Endothelial cell of umbilical vein (primary cell): ENCODE measurements at regions of chr16 and their contacts with region 1.

Region 1: DNA sequence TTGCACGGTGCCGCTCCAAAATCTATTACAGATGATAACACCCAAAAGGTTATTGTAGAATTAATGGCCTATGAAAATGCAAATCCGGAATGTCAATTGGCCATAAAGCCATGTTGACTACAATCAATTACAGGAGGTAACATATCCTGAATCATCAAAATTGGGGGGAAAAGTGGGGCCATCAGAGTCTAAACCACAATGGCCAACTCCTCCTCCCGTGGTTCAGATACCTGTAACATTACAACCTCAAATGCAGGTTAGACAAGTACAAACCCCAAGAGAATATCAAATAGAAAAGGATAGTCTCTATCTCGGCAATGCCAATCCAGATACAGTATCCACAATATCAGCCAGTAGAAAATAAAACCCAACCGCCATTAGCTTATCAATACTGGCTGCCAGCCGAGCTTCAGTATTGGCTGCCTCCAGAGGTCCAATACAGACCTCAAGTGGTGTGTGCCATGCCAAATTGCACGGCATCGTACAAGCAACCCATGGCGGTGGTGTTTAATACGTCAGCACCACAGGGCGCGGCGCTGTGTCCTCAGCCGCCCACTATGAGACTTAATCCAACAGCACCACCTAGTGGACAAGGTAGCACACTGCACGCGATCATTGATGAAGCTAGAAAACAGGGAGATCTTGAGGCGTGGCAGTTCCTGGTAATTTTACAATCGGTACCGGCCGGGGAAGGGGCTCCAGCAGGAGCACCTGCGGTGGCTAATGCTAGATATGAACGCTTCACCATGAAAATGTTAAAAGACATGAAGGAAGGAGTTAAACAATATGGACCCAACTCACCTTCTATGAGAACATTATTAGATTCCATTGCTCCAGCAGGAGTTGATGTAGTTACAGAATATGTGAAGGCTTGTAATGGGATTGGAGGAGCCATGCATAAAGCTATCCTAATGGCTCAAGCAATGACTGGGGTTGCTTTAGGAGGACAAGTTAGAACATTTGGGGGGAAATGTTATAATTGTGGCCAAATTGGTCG is 15.2 kb downstream of the FLYWCH1 start:
- DNase-seq: peak; percentile 81
- H3K4me3 ChIP-seq: peak overlapping the region in 1 of 3 experiments; percentile 7
- H3K27ac ChIP-seq: no peak overlapping the region
- H3K4me1 ChIP-seq: peaks cover 2% of the 10 kb centered on the region
- H3K27me3 ChIP-seq: no peaks in the 10 kb centered on the region
- CTCF ChIP-seq: peak; percentile 83 to 94
- POLR2A ChIP-seq: no peak

Region 2: DNA sequence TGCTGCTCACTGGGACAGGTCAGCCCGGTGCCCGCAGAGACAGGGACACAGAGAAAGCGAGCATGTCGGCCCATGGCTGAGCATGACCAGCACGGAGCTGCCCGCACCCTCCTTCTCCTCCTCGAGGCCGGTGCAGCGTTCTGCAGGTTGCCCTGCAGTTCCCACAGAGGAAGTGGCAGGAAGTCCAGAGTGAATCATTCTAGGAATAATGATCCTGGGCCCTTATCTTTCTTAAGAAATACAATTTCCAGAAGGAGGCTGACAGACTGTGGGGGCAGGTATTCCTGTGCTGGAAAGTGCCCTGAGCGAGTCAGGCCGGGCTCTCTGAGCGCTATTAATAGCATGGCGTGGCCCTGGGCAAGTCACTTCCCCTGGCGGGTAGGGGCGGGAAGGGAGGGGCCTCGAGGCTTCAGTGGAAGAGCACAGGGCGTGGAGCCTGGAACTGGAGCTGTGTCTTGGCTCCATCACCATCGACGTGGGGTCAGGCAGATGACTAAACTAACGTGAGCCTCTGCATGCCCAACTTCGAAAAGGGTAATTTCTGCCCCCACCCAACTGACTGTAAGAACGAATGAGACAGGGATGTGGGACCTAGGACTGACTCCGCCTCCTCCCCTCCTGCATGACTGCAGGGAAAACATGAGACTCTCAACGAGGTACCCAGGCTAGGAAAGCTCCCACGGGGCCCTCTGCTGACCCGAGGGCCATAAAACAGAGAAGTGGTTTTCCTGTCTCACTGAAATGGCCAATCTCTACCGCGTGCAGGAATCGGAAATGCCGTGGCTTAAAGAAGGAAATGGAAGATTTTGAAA is 1383.7 kb before region 1 on chr16:
- CTCF ChIA-PET with region 1: no interaction called
- POLR2A ChIA-PET with region 1: no interaction called
- dilution Hi-C with region 1: no loop called
- intact Hi-C with region 1: no loop called
- DNase-seq: peak; percentile 92
- H3K4me3 ChIP-seq: no peak overlapping the region
- H3K27ac ChIP-seq: peak overlapping the region; percentile 98
- H3K4me1 ChIP-seq: peaks cover 51% of the 10 kb centered on the region
- H3K27me3 ChIP-seq: no peaks in the 10 kb centered on the region
- CTCF ChIP-seq: peak; percentile 23 to 26
- POLR2A ChIP-seq: no peak

Region 3: DNA sequence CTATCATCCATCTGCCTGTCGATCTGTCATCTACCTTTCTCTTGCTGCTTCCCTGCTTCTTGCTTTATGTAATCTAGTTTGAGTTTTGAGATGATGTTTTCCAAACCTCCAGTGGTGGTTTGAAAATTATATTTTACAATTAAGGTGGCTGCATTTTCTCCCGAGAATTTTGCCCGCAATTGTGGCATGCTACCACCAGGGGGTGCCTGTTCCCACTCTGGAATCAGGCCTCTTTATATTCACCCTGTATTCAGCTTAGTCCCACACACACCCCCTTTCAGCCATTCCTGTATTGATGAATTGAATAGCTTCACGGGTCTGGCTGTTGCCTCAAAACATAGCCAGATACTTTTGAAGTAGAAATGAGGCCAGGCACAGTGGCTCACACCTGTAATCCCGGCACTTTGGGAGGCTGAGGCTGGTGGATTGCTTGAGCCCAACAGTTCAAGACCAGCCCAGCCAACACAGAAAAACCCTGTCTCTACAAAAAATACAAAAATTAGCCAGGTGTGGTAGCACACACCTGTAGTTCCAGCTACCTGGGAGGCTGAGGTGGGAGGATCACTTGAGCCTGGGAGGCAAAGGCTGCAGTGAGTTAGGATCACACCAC is 72.1 kb before region 1 on chr16:
- CTCF ChIA-PET with region 1: interaction called, 11 read pairs
- POLR2A ChIA-PET with region 1: no interaction called
- dilution Hi-C with region 1: no loop called
- intact Hi-C with region 1: no loop called
- DNase-seq: no peak
- H3K4me3 ChIP-seq: no peak overlapping the region
- H3K27ac ChIP-seq: no peak overlapping the region
- H3K4me1 ChIP-seq: no peaks in the 10 kb centered on the region
- H3K27me3 ChIP-seq: peaks cover 2 to 7% of the 10 kb centered on the region in 2 experiments
- CTCF ChIP-seq: peak; percentile 36 to 62
- POLR2A ChIP-seq: no peak

Region 4: DNA sequence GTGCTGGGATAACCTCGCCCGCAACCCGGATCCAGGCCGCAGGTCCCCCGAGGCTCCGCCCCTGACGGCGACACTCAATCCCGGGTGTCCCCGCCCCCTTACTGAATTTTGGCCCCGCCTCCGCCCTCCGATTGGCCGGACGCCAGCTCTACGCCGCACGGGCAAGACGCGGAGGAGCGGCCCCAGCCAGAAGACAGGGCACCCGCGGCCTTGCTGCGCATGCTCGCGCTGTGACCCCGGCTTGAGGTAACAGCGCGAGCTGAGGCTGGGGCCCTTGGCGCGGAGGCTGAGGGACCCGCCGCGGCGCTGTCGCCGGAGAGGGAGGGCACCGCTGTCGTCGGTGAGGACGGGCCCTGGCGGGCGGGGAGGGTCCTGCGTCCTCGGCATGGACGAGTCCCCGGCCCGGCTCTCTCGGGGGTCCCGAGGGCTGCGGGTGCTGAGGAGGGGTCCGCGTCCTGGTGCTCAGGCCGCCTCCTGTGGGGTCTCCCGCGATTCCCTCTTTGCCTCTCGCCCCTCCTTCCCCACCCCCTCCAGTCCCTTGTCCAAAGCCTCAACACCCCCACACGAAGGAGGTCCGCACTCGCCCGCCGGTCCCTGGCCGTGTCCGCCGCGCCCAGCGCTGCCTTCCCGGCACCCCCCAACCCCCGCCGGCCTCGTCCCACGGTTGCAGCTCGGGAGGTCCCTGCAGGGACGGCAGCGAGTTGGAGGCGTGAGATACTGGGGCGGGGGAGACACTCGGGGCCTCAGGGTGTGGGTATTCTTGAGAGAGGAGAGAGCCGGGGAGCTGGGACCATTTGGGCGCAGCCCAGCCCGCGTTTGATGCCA is 43.7 kb before region 1 on chr16 and contains the start of gene FLYWCH2:
- CTCF ChIA-PET with region 1: interaction called, 15 read pairs
- POLR2A ChIA-PET with region 1: no interaction called
- dilution Hi-C with region 1: no loop called
- intact Hi-C with region 1: no loop called
- DNase-seq: peak; percentile 99
- H3K4me3 ChIP-seq: peak within 1 kb of the TSS; percentile 42 to 91 (median 63)
- H3K27ac ChIP-seq: peak within 1 kb of the TSS; percentile 49
- H3K4me1 ChIP-seq: peaks cover 7% of the 10 kb centered on the region
- H3K27me3 ChIP-seq: no peaks in the 10 kb centered on the region
- CTCF ChIP-seq: no peak
- POLR2A ChIP-seq: peak; percentile 83
- total RNA-seq, gene FLYWCH2: 18.3 and 24.1 TPM in 2 replicates

Region 5: DNA sequence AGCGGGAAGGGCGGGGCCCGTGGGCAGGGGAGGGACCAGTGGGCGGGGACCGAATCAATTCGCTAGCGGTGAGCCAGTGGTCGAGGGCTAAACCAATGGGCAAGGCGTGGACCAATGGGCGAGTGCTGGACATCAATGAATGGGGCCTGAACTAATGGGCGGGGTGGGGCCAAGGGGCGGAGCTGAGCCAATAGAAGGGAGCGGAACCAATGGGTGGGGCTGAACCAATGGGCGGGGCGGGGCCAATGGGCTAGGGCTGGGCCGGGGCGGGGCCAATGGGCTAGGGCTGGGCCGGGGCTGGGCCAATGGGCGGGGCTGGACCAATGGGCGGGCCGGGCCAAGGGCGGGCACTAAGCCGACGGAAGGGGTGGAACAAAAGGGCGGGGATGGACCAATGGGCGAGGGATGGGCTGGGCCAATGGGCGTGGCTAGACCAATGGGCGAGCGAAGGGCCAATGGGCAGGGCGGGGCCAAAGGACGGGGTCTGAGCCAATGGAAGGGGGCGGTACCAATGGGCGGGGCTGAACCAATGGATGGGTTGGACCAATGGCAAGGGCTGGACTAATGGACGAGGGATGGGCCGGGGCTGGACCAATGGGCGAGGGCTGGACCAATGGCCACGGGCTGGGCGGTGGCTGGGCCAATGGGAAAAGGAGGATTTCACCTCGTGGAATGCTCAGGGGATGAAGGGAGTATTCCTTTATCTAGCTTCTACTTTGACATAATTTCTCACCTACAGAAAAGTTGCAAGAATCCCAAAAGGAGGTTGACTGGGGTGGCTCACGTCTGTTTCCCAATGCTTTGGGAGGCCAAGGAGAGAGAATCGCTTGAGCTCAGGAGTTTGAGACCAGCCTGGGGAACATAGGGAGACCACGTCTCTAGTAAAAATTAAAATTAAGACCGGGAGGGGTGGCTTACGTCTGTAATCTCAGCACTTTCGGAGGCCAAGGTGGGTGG is 21.2 kb before region 1 on chr16:
- CTCF ChIA-PET with region 1: interaction called, 21 read pairs
- POLR2A ChIA-PET with region 1: no interaction called
- dilution Hi-C with region 1: no loop called
- intact Hi-C with region 1: no loop called
- DNase-seq: peak; percentile 99
- H3K4me3 ChIP-seq: peak overlapping the region in 2 of 3 experiments; percentile 73 to 78
- H3K27ac ChIP-seq: no peak overlapping the region
- H3K4me1 ChIP-seq: peaks cover 9% of the 10 kb centered on the region
- H3K27me3 ChIP-seq: no peaks in the 10 kb centered on the region
- CTCF ChIP-seq: no peak
- POLR2A ChIP-seq: no peak

Region 6: GRCh38 chr16:2938206-2938605 is 11.3 kb after region 1 on chr16:
- CTCF ChIA-PET with region 1: interaction called, 25 read pairs
- POLR2A ChIA-PET with region 1: no interaction called
- dilution Hi-C with region 1: no loop called
- intact Hi-C with region 1: no loop called
- DNase-seq: no peak
- H3K4me3 ChIP-seq: no peak overlapping the region
- H3K27ac ChIP-seq: no peak overlapping the region
- H3K4me1 ChIP-seq: no peaks in the 10 kb centered on the region
- H3K27me3 ChIP-seq: no peaks in the 10 kb centered on the region
- CTCF ChIP-seq: no peak
- POLR2A ChIP-seq: no peak